ENCODE measurements at regions of chr1 and their contacts with region 1.

Region 1: GRCh38 chr1:224851210-224851847 is 78.1 kb upstream of the DNAH14 start:
- DNase-seq: peak; percentile 67
- H3K4me3 Mint-ChIP-seq: no peak overlapping the region
- H3K27ac Mint-ChIP-seq: peak overlapping the region; percentile 58
- H3K4me1 Mint-ChIP-seq: no peaks in the 10 kb centered on the region
- H3K27me3 Mint-ChIP-seq: peaks cover 6% of the 10 kb centered on the region

Region 2: DNA sequence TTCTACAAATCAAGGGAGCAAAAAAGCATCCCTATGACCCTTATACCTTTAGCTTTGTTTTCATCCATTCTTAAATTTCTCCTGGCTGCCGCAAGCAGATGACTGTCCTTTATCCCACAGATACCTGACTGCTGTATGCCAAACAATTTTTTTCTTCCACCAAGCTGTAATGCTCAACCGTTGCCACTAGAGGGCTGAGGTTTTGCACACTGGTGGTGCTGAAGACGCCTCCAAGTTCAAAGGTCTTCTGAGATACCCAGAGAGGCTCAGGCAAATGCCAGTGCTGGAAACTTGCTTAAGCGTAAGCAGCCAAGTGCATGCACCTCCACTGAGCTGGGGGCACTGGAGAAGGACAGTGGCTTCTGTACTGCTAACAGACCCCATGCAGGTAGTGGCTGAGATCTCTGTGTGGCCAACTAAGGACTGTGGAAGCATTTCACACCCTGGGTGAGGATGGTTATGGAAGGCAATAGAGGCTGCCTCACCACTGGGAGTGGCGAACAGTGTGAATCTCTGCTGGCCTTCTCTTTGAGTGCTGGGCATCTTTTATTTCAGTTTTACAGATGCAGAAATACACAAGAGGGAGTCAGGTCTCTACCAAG is 206.7 kb before region 1 on chr1:
- CTCF ChIA-PET with region 1: interaction called, 29 read pairs
- DNase-seq: peak; percentile 71
- H3K4me3 Mint-ChIP-seq: no peak overlapping the region
- H3K27ac Mint-ChIP-seq: no peak overlapping the region
- H3K4me1 Mint-ChIP-seq: no peaks in the 10 kb centered on the region
- H3K27me3 Mint-ChIP-seq: peaks cover 37% of the 10 kb centered on the region

Region 3: DNA sequence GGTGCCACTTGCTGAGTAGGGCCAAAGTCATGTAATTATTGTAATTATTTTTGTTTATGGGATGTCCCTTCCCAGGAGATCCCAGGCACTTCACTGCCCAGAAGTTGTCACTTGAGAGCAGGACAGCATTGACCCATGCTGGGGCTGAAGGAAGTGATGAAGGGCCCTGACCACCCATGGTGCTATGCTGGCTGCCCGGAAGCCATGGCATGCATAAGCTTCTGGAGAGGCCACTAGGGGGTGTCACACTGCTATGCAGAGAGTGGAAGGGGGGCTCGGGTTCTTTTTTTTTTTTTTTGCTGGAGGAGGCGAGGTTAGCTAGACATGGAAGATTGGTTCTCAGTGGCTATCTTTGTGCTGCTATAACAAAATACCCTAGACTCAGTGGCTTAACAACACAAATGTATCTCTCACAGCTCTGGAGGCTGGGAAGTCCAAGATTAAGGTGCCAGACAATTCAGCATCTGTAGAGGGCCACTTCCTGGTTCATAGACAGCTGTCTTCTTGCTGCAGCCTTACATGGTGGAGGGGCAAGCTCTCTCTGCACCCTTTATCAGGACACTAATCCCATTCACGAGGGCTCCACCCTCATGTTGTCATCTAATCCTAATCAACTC is 150.3 kb before region 1 on chr1:
- CTCF ChIA-PET with region 1: interaction called, 62 read pairs
- DNase-seq: no peak
- H3K4me3 Mint-ChIP-seq: no peak overlapping the region
- H3K27ac Mint-ChIP-seq: no peak overlapping the region
- H3K4me1 Mint-ChIP-seq: no peaks in the 10 kb centered on the region
- H3K27me3 Mint-ChIP-seq: peaks cover 25% of the 10 kb centered on the region

Region 4: GRCh38 chr1:224863970-224864369 is 12.6 kb after region 1 on chr1:
- CTCF ChIA-PET with region 1: interaction called, 14 read pairs
- DNase-seq: no peak
- H3K4me3 Mint-ChIP-seq: no peak overlapping the region
- H3K27ac Mint-ChIP-seq: no peak overlapping the region
- H3K4me1 Mint-ChIP-seq: no peaks in the 10 kb centered on the region
- H3K27me3 Mint-ChIP-seq: peaks cover 5% of the 10 kb centered on the region